ENCODE measurements at regions of chr11 and their contacts with region 1.

Region 1: GRCh38 chr11:94504689-94505293 is 7.5 kb upstream of the C11orf97 start:
- DNase-seq: peak; percentile 52
- CTCF ChIP-seq: peak; percentile 54

Region 2: GRCh38 chr11:93895106-93895862 is 609.5 kb before region 1 on chr11:
- CTCF ChIA-PET with region 1: interaction called, 16 read pairs
- POLR2A ChIA-PET with region 1: no interaction called
- DNase-seq: no peak
- CTCF ChIP-seq: peak; percentile 18

Region 3: GRCh38 chr11:94171693-94172440 is 332.9 kb before region 1 on chr11:
- CTCF ChIA-PET with region 1: interaction called, 10 read pairs
- POLR2A ChIA-PET with region 1: no interaction called
- DNase-seq: peak; percentile 46
- CTCF ChIP-seq: peak; percentile 82

Region 4: GRCh38 chr11:94325681-94326080 is 179.1 kb before region 1 on chr11:
- CTCF ChIA-PET with region 1: interaction called, 31 read pairs
- POLR2A ChIA-PET with region 1: no interaction called
- DNase-seq: peak; percentile 71
- CTCF ChIP-seq: peak; percentile 89

Region 5: GRCh38 chr11:94519478-94520084 is 14.8 kb after region 1 on chr11:
- CTCF ChIA-PET with region 1: interaction called, 13 read pairs
- POLR2A ChIA-PET with region 1: no interaction called
- DNase-seq: peak; percentile 34
- CTCF ChIP-seq: peak; percentile 49